Thyroid gland (tissue), 4 donors: ENCODE measurements at regions of chr3 and their contacts with region 1.

Region 1: DNA sequence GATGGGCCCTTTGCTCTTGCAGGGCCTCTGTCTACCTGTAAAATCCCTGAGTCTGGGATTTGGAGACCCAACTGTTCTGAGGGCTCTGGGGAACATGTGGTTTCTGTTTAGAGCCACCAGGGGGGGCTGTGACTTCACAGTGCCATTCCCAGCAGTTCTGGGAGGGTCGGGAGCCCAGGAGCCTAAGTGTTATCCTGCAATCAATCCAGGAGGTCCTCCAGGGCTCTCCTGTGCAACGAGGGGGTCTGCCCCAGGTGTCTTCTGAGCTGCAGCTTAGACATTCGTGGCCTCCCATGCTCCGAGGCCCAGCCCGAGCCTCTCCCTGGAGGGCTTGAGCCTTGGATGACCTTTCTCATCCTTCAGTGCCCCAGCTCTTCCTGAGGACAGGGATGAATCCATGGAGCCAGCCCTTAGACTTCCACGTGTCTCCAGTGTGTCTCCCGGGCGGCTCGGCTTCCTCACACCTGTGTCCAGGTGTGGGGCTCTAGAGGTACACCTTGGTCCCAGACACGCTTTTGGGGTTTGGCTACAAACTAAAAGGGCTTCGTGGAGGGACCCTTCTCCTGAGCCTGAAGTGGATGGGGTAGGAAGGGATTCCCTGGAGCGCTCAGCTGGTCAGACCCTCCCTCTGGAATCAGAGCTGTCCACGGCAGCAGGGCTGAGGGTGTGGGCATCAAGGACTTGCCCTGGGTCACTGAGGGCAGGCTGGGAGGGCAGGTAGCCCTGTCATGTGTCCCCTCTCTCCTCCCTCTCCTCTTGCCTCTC is 20.3 kb upstream of the ABTB1 start:
- DNase-seq: peak; percentile 42 to 50
- H3K4me3 ChIP-seq: no peak overlapping the region
- H3K27ac ChIP-seq: no peak overlapping the region
- H3K4me1 ChIP-seq: no peaks in the 10 kb centered on the region
- H3K27me3 ChIP-seq: no peaks in the 10 kb centered on the region
- CTCF ChIP-seq: peak; percentile 62 to 83 (median 74)
- POLR2A ChIP-seq: no peak

Region 2: DNA sequence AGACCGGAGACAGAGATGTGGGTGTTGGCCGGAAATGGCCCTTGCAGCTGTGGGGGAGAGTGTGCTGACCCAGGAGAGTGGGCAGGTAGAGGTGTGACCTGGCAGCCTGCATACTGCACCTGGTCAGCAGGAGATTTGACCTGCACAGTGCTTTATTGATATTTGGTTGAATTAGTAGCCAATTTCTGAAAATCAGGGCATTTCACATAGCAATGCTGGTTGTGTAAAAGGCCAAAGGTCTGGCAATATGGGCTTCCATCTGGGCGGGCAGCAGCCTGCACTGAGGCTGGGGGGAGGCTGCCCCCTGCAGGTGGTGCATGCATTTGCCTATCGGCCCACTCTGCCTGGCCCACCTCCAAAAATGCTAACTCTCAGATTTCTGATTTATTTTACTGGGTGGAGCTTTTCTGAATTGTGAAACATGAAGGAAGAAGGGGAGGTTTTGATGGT is 179.3 kb after region 1 on chr3:
- intact Hi-C with region 1: loop called (anchors 5 kb)
- DNase-seq: peak; percentile 8 to 47
- H3K4me3 ChIP-seq: no peak overlapping the region
- H3K27ac ChIP-seq: no peak overlapping the region
- H3K4me1 ChIP-seq: no peaks in the 10 kb centered on the region
- H3K27me3 ChIP-seq: no peaks in the 10 kb centered on the region
- CTCF ChIP-seq: peak in 4 of 6 experiments; percentile 14 to 53 (median 48)
- POLR2A ChIP-seq: no peak

Region 3: GRCh38 chr3:127970966-127971592 is 318.7 kb after region 1 on chr3:
- intact Hi-C with region 1: loop called (anchors 5 kb)
- DNase-seq: peak; percentile 16 to 20
- H3K4me3 ChIP-seq: no peak overlapping the region
- H3K27ac ChIP-seq: no peak overlapping the region
- H3K4me1 ChIP-seq: no peaks in the 10 kb centered on the region
- H3K27me3 ChIP-seq: no peaks in the 10 kb centered on the region
- CTCF ChIP-seq: peak; percentile 15 to 59 (median 52)
- POLR2A ChIP-seq: no peak